Ascending aorta (tissue), 2 donors: ENCODE measurements at regions of chr10 and their contacts with region 1.

Region 1: GRCh38 chr10:50624866-50625692 is 1.3 kb upstream of the SGMS1 start:
- DNase-seq: peak; percentile 17 to 85
- H3K4me3 ChIP-seq: peak overlapping the region; percentile 72 to 85
- H3K27ac ChIP-seq: peak overlapping the region; percentile 97 to 98
- H3K4me1 ChIP-seq: peaks cover 0 to 10% of the 10 kb centered on the region in 2 donors
- H3K27me3 ChIP-seq: no peaks in the 10 kb centered on the region
- CTCF ChIP-seq: peak; percentile 56 to 76 (median 69)

Region 2: GRCh38 chr10:50325449-50326171 is 299.5 kb before region 1 on chr10:
- intact Hi-C with region 1: loop called (anchors 1 kb)
- DNase-seq: peak; percentile 50 to 91
- H3K4me3 ChIP-seq: peak overlapping the region in 1 of 2 donors; percentile 39
- H3K27ac ChIP-seq: peak overlapping the region; percentile 73 to 76
- H3K4me1 ChIP-seq: peaks cover 4 to 37% of the 10 kb centered on the region in 2 donors
- H3K27me3 ChIP-seq: no peaks in the 10 kb centered on the region
- CTCF ChIP-seq: no peak

Region 3: GRCh38 chr10:50417886-50418830 is 206.9 kb before region 1 on chr10:
- intact Hi-C with region 1: loop called (anchors 1 kb)
- DNase-seq: peak in 1 of 2 donors; percentile 79
- H3K4me3 ChIP-seq: peak overlapping the region; percentile 93 to 94
- H3K27ac ChIP-seq: peak overlapping the region; percentile 66 to 85
- H3K4me1 ChIP-seq: peaks cover 0 to 12% of the 10 kb centered on the region in 2 donors
- H3K27me3 ChIP-seq: no peaks in the 10 kb centered on the region
- CTCF ChIP-seq: no peak

Region 4: DNA sequence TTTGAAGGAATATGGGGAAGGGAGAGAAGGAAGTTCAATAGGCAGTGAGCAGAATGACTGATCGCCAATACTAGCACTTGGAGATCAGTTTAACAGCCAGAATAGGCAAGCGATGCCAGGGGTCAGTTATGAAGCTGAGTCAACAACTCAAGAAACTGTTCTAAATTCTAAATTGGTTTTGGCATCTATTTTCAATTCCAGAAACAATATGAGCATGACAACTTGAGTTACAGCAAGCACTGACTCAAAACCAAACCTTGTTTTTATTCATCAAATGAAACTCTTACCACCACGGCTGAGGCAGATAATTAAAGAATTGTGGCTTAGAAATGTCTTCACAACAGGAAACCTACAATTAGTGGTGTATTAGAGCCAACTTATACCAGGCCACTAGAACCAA is 193.3 kb before region 1 on chr10:
- intact Hi-C with region 1: loop called (anchors 2 kb)
- DNase-seq: peak in 1 of 2 donors; percentile 65
- H3K4me3 ChIP-seq: peak overlapping the region; percentile 29 to 43
- H3K27ac ChIP-seq: peak overlapping the region; percentile 77 to 83
- H3K4me1 ChIP-seq: peaks cover 0 to 9% of the 10 kb centered on the region in 2 donors
- H3K27me3 ChIP-seq: no peaks in the 10 kb centered on the region
- CTCF ChIP-seq: no peak

Region 5: GRCh38 chr10:50497757-50498156 is 127.3 kb before region 1 on chr10:
- intact Hi-C with region 1: loop called (anchors 5 kb)
- DNase-seq: no peak
- H3K4me3 ChIP-seq: peak overlapping the region in 1 of 2 donors; percentile 28
- H3K27ac ChIP-seq: peak overlapping the region; percentile 68 to 78
- H3K4me1 ChIP-seq: peaks cover 0 to 11% of the 10 kb centered on the region in 2 donors
- H3K27me3 ChIP-seq: no peaks in the 10 kb centered on the region
- CTCF ChIP-seq: no peak

Region 6: GRCh38 chr10:50561816-50562215 is 63.3 kb before region 1 on chr10:
- intact Hi-C with region 1: loop called (anchors 1 kb)
- DNase-seq: no peak
- H3K4me3 ChIP-seq: peak overlapping the region in 1 of 2 donors; percentile 37
- H3K27ac ChIP-seq: peak overlapping the region; percentile 26 to 27
- H3K4me1 ChIP-seq: peaks cover 5 to 28% of the 10 kb centered on the region in 2 donors
- H3K27me3 ChIP-seq: no peaks in the 10 kb centered on the region
- CTCF ChIP-seq: peak in 2 of 3 experiments; percentile 26 to 40

Region 7: GRCh38 chr10:50605269-50606263 is 19.5 kb before region 1 on chr10:
- intact Hi-C with region 1: loop called (anchors 2 kb)
- DNase-seq: peak in 1 of 2 donors; percentile 74
- H3K4me3 ChIP-seq: no peak overlapping the region
- H3K27ac ChIP-seq: peak overlapping the region; percentile 52 to 57
- H3K4me1 ChIP-seq: peaks cover 6 to 44% of the 10 kb centered on the region in 2 donors
- H3K27me3 ChIP-seq: no peaks in the 10 kb centered on the region
- CTCF ChIP-seq: no peak